OCI-LY7 (cell line): ENCODE measurements at regions of chr2 and their contacts with region 1.

Region 1: DNA sequence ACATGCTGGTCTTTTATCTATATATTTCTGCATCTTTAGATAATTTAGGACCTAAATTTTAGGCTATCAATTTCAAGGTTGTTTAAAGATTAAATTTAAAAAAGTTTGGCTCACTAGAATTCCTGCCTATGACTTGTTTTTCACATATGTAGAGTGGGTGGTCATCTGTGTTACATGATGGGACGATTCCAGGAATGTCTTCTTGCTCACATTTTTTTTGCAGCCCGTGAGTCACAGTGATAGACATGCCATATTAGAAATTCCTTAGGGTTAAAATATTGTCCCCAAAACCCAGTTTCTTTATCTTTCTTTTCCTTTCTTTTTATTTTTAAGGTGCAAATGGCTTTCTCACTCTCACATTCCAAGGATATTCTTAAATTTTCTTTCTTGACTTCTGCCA is 652.0 kb downstream of the PLCL1 start:
- DNase-seq: no peak
- H3K4me3 ChIP-seq: no peak overlapping the region
- H3K27ac ChIP-seq: no peak overlapping the region
- H3K4me1 ChIP-seq: peaks cover 20% of the 10 kb centered on the region
- CTCF ChIP-seq: no peak

Region 2: GRCh38 chr2:198558176-198558575 is 101.8 kb after region 1 on chr2:
- CTCF ChIA-PET with region 1: no interaction called
- POLR2A ChIA-PET with region 1: no interaction called
- intact Hi-C with region 1: no loop called
- DNase-seq: no peak
- H3K4me3 ChIP-seq: no peak overlapping the region
- H3K27ac ChIP-seq: no peak overlapping the region
- H3K4me1 ChIP-seq: no peaks in the 10 kb centered on the region
- CTCF ChIP-seq: no peak

Region 3: GRCh38 chr2:198596985-198597384 is 140.6 kb after region 1 on chr2:
- CTCF ChIA-PET with region 1: no interaction called
- POLR2A ChIA-PET with region 1: no interaction called
- intact Hi-C with region 1: no loop called
- DNase-seq: no peak
- H3K4me3 ChIP-seq: no peak overlapping the region
- H3K27ac ChIP-seq: no peak overlapping the region
- H3K4me1 ChIP-seq: peaks cover 15% of the 10 kb centered on the region
- CTCF ChIP-seq: no peak

Region 4: GRCh38 chr2:198961547-198961946 is 505.1 kb after region 1 on chr2:
- CTCF ChIA-PET with region 1: no interaction called
- POLR2A ChIA-PET with region 1: no interaction called
- intact Hi-C with region 1: loop called (anchors 5 kb)
- DNase-seq: no peak
- H3K4me3 ChIP-seq: no peak overlapping the region
- H3K27ac ChIP-seq: no peak overlapping the region
- H3K4me1 ChIP-seq: no peaks in the 10 kb centered on the region
- CTCF ChIP-seq: peak; percentile 50